ENCODE measurements at regions of chr1 and their contacts with region 1.

Region 1: DNA sequence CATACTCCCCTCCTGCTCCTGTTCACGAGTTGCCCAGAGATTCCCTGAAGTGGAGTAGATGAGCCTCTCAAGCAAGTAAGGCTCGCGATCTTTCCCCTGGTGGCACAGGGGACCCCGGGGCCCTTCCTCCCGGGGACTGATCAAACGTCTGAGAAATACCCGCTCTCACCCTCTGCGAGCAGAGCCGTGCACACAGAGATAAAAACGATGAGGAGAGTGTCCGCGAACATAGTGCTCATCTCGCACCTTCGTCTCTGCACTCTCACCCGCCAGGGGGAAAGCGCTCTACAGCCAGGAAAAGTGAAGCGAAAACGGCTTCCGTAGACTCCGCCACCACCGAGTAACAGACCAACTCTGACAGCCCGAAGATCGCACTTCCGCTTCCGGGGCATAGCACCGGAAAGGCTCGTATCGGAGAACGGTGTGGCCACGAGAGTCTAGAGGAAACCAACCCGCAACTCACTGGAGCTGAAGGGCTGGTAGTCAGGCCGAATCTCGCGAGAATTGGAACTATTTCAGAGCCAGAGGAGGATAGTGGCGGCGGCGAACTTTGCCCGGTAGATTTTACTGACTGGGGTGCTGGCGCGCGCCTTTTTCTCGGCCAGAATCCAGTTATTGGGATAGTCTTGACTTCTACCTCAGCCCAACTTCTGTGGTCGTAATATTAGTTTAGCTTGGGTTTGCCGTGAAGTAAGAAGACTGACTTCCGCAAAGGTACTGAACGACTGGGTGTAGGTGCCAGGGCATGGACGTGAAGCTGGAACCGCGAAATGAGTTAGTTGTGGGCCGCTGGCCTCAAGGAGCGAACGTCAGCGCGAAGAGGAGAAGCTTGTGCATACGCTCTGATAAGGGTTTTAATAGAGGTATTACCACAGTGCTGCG is at the start of gene TMCO1:
- DNase-seq: peak; percentile 94 to 97 (median 96)
- ATAC-seq: peak; percentile 100
- H3K4me3 ChIP-seq: peak within 1 kb of the TSS; percentile 52 to 88 (median 76)
- H3K27ac ChIP-seq: peak within 1 kb of the TSS; percentile 64 to 94 (median 87)
- H3K4me1 ChIP-seq: peaks cover 5 to 46% (median 31%) of the 10 kb centered on the region in 12 donors
- H3K27me3 ChIP-seq: no peaks in the 10 kb centered on the region
- CTCF ChIP-seq: peak in 4 of 12 donors; percentile 12 to 39 (median 30)
- POLR2A ChIP-seq: peak in 1 of 2 donors; percentile 68
- total RNA-seq, gene TMCO1: 33.2 to 66.6 (median 54.3) TPM

Region 2: DNA sequence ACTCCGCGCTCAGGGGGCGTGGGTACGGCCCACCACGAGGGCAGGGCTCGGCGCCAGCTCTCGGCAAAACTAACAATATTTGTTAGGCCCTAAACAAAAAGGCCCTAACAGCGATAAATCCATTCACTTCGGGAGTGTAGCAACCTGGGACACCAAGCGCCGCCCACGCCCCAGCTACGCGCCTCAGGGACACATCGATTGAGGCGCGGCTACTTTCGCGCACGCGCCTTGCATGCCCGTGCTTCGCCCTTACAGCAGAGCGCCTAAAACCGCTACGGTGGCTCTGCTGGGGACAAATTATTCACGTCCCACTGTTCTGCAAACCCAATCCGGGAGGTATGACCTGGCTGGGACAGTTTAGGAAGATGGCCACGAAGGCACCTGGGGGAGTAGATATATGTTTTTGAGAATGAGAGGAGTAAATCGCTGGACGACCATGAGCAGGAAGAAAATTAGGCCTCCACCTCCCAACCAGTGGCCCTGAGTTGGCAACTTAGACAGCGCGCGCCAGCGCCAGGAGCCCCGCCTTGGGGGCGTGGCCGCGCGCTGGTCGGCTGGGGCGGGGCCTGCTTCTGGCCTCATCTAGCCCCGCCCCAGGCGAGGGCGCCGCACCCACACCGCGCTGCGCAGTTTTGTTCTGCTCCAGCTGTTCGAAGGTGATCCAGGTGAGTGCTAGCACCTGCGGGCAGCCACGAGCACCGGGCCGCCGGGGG is 138.0 kb before region 1 on chr1 and contains the start of gene MGST3:
- intact Hi-C with region 1: loop called in 3 of 10 experiments (anchors 5 to 10 kb)
- DNase-seq: peak; percentile 95 to 97 (median 96)
- ATAC-seq: peak; percentile 95 to 98 (median 97)
- H3K4me3 ChIP-seq: peak within 1 kb of the TSS; percentile 63 to 96 (median 89)
- H3K27ac ChIP-seq: peak within 1 kb of the TSS; percentile 69 to 99 (median 93)
- H3K4me1 ChIP-seq: peaks cover 4 to 49% (median 35%) of the 10 kb centered on the region in 12 donors
- H3K27me3 ChIP-seq: no peaks in the 10 kb centered on the region
- CTCF ChIP-seq: no peak
- POLR2A ChIP-seq: peak; percentile 92 to 94
- total RNA-seq, gene MGST3: 408 to 1,027 (median 747) TPM

Region 3: GRCh38 chr1:165697881-165698760 is 70.6 kb before region 1 on chr1 and contains the start of gene ALDH9A1:
- intact Hi-C with region 1: loop called in 4 of 10 experiments (anchors 1 to 5 kb)
- DNase-seq: peak; percentile 89 to 95 (median 92)
- ATAC-seq: peak; percentile 94 to 98 (median 96)
- H3K4me3 ChIP-seq: peak within 1 kb of the TSS; percentile 41 to 89 (median 70)
- H3K27ac ChIP-seq: peak within 1 kb of the TSS; percentile 80 to 98 (median 94)
- H3K4me1 ChIP-seq: peaks cover 0 to 31% (median 19%) of the 10 kb centered on the region in 12 donors
- H3K27me3 ChIP-seq: no peaks in the 10 kb centered on the region
- CTCF ChIP-seq: peak in 9 of 12 donors; percentile 7 to 52 (median 41)
- POLR2A ChIP-seq: peak in 1 of 2 donors; percentile 87
- total RNA-seq, gene ALDH9A1: 51.1 to 77.0 (median 66.1) TPM

Region 4: GRCh38 chr1:165827268-165828102 is 58.7 kb after region 1 on chr1 and contains the start of gene UCK2:
- intact Hi-C with region 1: loop called in 7 of 10 experiments (anchors 1 to 10 kb)
- DNase-seq: peak; percentile 81 to 88 (median 85)
- ATAC-seq: peak; percentile 77 to 96 (median 94)
- H3K4me3 ChIP-seq: peak within 1 kb of the TSS; percentile 77 to 98 (median 86)
- H3K27ac ChIP-seq: peak within 1 kb of the TSS; percentile 67 to 93 (median 88)
- H3K4me1 ChIP-seq: peaks cover 0 to 24% (median 10%) of the 10 kb centered on the region in 12 donors
- H3K27me3 ChIP-seq: no peaks in the 10 kb centered on the region
- CTCF ChIP-seq: peak in 4 of 12 donors; percentile 1 to 40 (median 8)
- POLR2A ChIP-seq: peak in 1 of 2 donors; percentile 34
- total RNA-seq, gene UCK2: 7.6 to 26.6 (median 13.9) TPM

Region 5: DNA sequence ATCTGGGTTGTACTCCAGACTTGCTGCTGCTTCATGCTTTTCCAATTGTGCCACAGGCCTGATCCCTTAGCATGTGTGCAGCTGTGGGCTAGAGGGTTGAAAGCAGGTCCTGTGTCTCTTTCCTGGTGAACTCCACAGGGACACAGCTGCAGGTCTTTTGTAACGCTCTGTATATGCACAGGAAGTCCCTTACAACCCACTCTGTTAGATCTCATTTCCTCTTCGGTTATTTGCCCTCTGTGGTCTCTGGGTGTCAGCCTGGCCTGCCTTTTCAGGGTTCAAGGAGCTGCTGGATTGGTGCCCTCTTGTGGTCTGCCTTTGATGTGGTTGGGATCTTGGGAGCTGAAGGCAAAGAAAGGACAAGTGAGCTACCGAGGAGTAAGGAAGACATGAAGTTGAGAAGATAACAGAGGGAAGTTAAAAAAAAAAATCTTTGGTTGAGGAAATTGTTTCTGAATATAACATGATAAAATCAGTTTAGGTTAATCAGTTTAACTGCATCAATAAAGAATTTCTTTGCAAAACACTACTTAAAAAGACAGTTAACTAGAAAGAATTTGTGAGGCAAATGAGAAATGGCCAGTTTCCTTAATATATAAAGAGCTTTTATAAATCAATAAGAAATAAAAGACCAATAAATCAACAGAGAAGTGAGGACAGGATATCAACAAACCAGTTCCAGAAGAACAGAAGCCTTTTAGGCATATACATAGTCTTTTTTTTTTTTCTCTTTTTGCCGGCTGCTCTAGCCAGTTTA is 102.7 kb after region 1 on chr1:
- intact Hi-C with region 1: loop called in 1 of 10 experiments (anchors 2 kb)
- DNase-seq: peak in 4 of 5 donors; percentile 46 to 65 (median 52)
- ATAC-seq: peak; percentile 32 to 80 (median 60)
- H3K4me3 ChIP-seq: no peak overlapping the region
- H3K27ac ChIP-seq: peak overlapping the region in 1 of 12 donors; percentile 4
- H3K4me1 ChIP-seq: peaks cover 0 to 23% (median 0%) of the 10 kb centered on the region in 12 donors
- H3K27me3 ChIP-seq: no peaks in the 10 kb centered on the region
- CTCF ChIP-seq: peak; percentile 18 to 57 (median 42)
- POLR2A ChIP-seq: no peak